ENCODE measurements at regions of chr21 and their contacts with region 1.

Region 1: GRCh38 chr21:26007951-26008498 is 162.5 kb downstream of the APP start:
- DNase-seq: no peak
- ATAC-seq: peak; percentile 77

Region 2: GRCh38 chr21:25995278-25995677 is 12.7 kb before region 1 on chr21:
- intact Hi-C with region 1: loop called (anchors 1 kb)
- DNase-seq: no peak
- ATAC-seq: no peak

Region 3: GRCh38 chr21:26041431-26042180 is 33.6 kb after region 1 on chr21:
- intact Hi-C with region 1: no loop called
- DNase-seq: no peak
- ATAC-seq: peak; percentile 70

Region 4: DNA sequence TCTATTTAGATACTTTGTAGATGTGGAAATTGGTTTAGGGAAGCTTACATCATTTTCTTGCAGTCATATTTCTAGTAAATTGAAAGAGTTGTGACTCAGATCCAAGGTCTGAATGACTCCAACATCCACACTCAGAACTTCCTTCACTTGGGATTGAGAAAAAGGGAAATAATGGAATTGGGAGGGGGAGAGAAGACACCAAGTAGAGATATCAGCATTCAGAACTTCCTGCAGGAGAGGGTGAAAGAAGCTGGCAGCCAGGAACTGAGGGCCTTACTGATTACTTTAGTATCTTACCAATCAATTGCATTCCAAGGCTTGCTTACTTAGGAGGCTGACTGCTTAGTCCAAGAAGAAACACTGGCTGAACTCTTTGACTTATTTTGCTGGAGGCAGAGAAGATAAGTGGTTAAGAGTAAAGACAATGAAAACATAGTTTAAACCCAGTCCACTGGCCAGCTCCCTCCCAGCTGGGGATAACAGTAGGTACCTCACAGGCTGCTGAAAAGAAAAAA is 140.9 kb after region 1 on chr21:
- intact Hi-C with region 1: no loop called
- DNase-seq: no peak
- ATAC-seq: peak; percentile 49

Region 5: DNA sequence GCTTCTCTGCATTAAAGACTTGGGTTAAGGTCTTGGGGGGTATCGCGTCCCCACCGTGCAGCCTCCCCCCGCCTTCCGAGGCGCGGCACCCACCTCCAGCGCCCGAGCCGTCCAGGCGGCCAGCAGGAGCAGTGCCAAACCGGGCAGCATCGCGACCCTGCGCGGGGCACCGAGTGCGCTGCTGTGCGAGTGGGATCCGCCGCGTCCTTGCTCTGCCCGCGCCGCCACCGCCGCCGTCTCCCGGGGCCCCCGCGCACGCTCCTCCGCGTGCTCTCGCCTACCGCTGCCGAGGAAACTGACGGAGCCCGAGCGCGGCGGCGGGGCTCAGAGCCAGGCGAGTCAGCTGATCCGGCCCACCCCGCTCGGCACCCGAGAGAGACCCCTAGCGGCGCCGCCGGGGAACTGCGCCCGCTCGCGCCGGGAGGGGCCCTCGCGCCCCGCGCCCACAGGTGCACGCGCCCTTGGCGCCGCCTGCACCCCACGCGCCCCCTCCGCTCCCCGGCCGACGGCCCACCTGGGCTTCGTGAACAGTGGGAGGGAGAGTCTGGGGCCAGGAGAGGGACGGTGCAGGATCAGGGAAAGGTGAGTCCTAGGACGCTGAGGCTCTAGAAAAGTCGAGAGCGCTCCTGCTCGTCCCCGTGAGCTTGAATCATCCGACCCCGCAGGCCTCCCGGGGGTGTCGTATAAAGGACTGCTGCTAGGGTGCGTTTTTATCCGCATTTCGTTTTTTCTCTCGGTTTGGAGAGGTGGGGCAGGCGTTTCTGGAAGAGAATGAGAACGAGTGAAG is 162.6 kb after region 1 on chr21 and contains the start of gene APP:
- intact Hi-C with region 1: loop called (anchors 10 kb)
- DNase-seq: peak; percentile 93
- ATAC-seq: peak; percentile 82
- total RNA-seq, gene APP: 497 TPM

Region 6: GRCh38 chr21:27466140-27466539 is 1458.1 kb after region 1 on chr21:
- intact Hi-C with region 1: no loop called
- DNase-seq: no peak
- ATAC-seq: no peak